MCF 10A (cell line): ENCODE measurements at regions of chr19 and their contacts with region 1.

Region 1: GRCh38 chr19:6238643-6239281 is 41.0 kb downstream of the MLLT1 start:
- DNase-seq: peak; percentile 79
- H3K4me3 Mint-ChIP-seq: peak overlapping the region; percentile 56
- H3K27ac Mint-ChIP-seq: peak overlapping the region; percentile 3
- H3K4me1 Mint-ChIP-seq: peaks cover 34% of the 10 kb centered on the region
- H3K27me3 Mint-ChIP-seq: no peaks in the 10 kb centered on the region
- CTCF ChIP-seq: no peak

Region 2: DNA sequence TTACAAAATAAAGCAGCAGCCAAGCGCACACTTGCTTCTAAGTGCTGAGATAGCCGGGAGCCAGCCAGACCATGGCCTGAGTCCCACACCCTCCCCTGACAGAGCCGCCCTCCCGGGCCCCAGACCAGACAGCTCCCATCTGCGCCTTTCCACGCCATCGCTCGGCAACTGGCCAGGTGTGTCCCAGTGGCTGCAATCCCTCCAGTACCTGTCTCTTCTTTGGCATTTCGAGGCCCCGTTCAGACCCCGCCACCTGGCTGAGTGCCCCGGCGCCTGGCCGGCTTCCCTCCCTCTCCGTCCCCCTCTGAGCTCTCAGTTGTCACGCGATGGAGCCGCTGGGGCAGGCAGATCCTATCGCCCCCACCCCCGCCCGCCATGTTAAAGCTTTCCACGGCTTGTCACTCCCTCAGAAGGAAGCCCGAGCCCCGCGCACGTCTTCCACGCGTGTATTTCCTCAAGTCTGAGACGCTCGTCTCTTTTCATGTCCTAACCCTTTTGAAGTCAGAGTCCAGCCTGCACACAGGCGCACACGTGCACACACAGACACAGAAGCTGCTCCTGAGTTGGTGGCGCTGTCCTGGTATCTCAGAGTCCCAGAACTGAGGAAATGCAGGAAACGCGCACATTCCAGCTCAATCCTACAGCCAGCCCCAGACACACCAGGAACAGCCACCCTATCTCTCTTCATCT is 33.1 kb after region 1 on chr19:
- CTCF ChIA-PET with region 1: no interaction called
- POLR2A ChIA-PET with region 1: interaction called, 4 read pairs
- intact Hi-C with region 1: loop called (anchors 2 kb)
- DNase-seq: no peak
- H3K4me3 Mint-ChIP-seq: no peak overlapping the region
- H3K27ac Mint-ChIP-seq: peak overlapping the region; percentile 69
- H3K4me1 Mint-ChIP-seq: peaks cover 42% of the 10 kb centered on the region
- H3K27me3 Mint-ChIP-seq: no peaks in the 10 kb centered on the region
- CTCF ChIP-seq: no peak